Heart left ventricle (tissue), 16 donors: ENCODE measurements at regions of chr15 and their contacts with region 1.

Region 1: GRCh38 chr15:67065444-67066093 is at the start of gene SMAD3:
- DNase-seq: peak; percentile 93 to 95 (median 93)
- ATAC-seq: peak; percentile 80 to 92 (median 88)
- H3K4me3 ChIP-seq: peak within 1 kb of the TSS; percentile 78 to 95 (median 88)
- H3K27ac ChIP-seq: peak within 1 kb of the TSS; percentile 77 to 96 (median 92)
- H3K4me1 ChIP-seq: peaks cover 5 to 49% (median 32%) of the 10 kb centered on the region in 12 donors
- H3K27me3 ChIP-seq: no peaks in the 10 kb centered on the region
- CTCF ChIP-seq: peak in 3 of 12 donors; percentile 4 to 24 (median 5)
- POLR2A ChIP-seq: peak; percentile 10 to 79
- total RNA-seq, gene SMAD3: 12.1 to 34.3 (median 16.3) TPM

Region 2: GRCh38 chr15:66997212-66997611 is 68.4 kb before region 1 on chr15:
- intact Hi-C with region 1: no loop called
- DNase-seq: no peak
- ATAC-seq: no peak
- H3K4me3 ChIP-seq: no peak overlapping the region
- H3K27ac ChIP-seq: no peak overlapping the region
- H3K4me1 ChIP-seq: no peaks in the 10 kb centered on the region
- H3K27me3 ChIP-seq: peaks cover 0 to 2% (median 0%) of the 10 kb centered on the region in 9 donors
- CTCF ChIP-seq: no peak
- POLR2A ChIP-seq: no peak

Region 3: GRCh38 chr15:67024314-67024997 is 41.1 kb before region 1 on chr15:
- intact Hi-C with region 1: loop called in 1 of 10 experiments (anchors 5 kb)
- DNase-seq: peak in 4 of 5 donors; percentile 78 to 84 (median 80)
- ATAC-seq: peak; percentile 72 to 96 (median 94)
- H3K4me3 ChIP-seq: no peak overlapping the region
- H3K27ac ChIP-seq: peak overlapping the region; percentile 35 to 83 (median 66)
- H3K4me1 ChIP-seq: peaks cover 7 to 68% (median 33%) of the 10 kb centered on the region in 12 donors
- H3K27me3 ChIP-seq: no peaks in the 10 kb centered on the region
- CTCF ChIP-seq: no peak
- POLR2A ChIP-seq: no peak

Region 4: GRCh38 chr15:67114846-67115600 is 49.5 kb after region 1 on chr15:
- intact Hi-C with region 1: loop called in 2 of 10 experiments (anchors 2 to 5 kb)
- DNase-seq: peak in 1 of 5 donors; percentile 21
- ATAC-seq: no peak
- H3K4me3 ChIP-seq: no peak overlapping the region
- H3K27ac ChIP-seq: peak overlapping the region in 5 of 12 donors; percentile 0 to 93 (median 39)
- H3K4me1 ChIP-seq: peaks cover 12 to 82% (median 53%) of the 10 kb centered on the region in 12 donors
- H3K27me3 ChIP-seq: no peaks in the 10 kb centered on the region
- CTCF ChIP-seq: no peak
- POLR2A ChIP-seq: no peak

Region 5: GRCh38 chr15:67146875-67147381 is 81.4 kb after region 1 on chr15:
- intact Hi-C with region 1: loop called in 1 of 10 experiments (anchors 5 kb)
- DNase-seq: peak in 3 of 5 donors; percentile 49 to 59 (median 50)
- ATAC-seq: peak; percentile 22 to 73 (median 56)
- H3K4me3 ChIP-seq: no peak overlapping the region
- H3K27ac ChIP-seq: peak overlapping the region; percentile 14 to 87 (median 74)
- H3K4me1 ChIP-seq: peaks cover 18 to 95% (median 80%) of the 10 kb centered on the region in 12 donors
- H3K27me3 ChIP-seq: no peaks in the 10 kb centered on the region
- CTCF ChIP-seq: no peak
- POLR2A ChIP-seq: no peak

Region 6: GRCh38 chr15:67165254-67166253 is 100.0 kb after region 1 on chr15:
- intact Hi-C with region 1: loop called in 1 of 10 experiments (anchors 5 kb)
- DNase-seq: peak; percentile 66 to 78 (median 76)
- ATAC-seq: peak in 3 of 4 donors; percentile 61 to 73 (median 72)
- H3K4me3 ChIP-seq: no peak overlapping the region
- H3K27ac ChIP-seq: peak overlapping the region in 10 of 12 donors; percentile 29 to 72 (median 50)
- H3K4me1 ChIP-seq: peaks cover 0 to 68% (median 48%) of the 10 kb centered on the region in 12 donors
- H3K27me3 ChIP-seq: no peaks in the 10 kb centered on the region
- CTCF ChIP-seq: no peak
- POLR2A ChIP-seq: no peak

Region 7: GRCh38 chr15:67254238-67255175 is 188.9 kb after region 1 on chr15 and contains the starts of genes AAGAB and IQCH:
- intact Hi-C with region 1: loop called in 7 of 10 experiments (anchors 5 to 10 kb)
- DNase-seq: peak; percentile 97 to 100 (median 98)
- ATAC-seq: peak; percentile 99 to 100 (median 100)
- H3K4me3 ChIP-seq: peak within 1 kb of the TSS; percentile 73 to 97 (median 88)
- H3K27ac ChIP-seq: peak within 1 kb of the TSS; percentile 10 to 91 (median 81)
- H3K4me1 ChIP-seq: peaks cover 0 to 29% (median 12%) of the 10 kb centered on the region in 12 donors
- H3K27me3 ChIP-seq: no peaks in the 10 kb centered on the region
- CTCF ChIP-seq: peak in 3 of 12 donors; percentile 13 to 22 (median 22)
- POLR2A ChIP-seq: peak in 1 of 2 donors; percentile 76
- total RNA-seq, gene AAGAB: 16.4 to 32.4 (median 28.0) TPM
- total RNA-seq, gene IQCH: 0.24 to 3.3 (median 1.4) TPM